ENCODE measurements at regions of chr2 and their contacts with region 1.

Region 1: GRCh38 chr2:178397002-178397605 is 53.9 kb downstream of the PRKRA start:
- DNase-seq: no peak
- H3K4me3 ChIP-seq: no peak overlapping the region
- H3K27ac ChIP-seq: no peak overlapping the region
- H3K4me1 ChIP-seq: no peaks in the 10 kb centered on the region
- H3K27me3 ChIP-seq: no peaks in the 10 kb centered on the region
- CTCF ChIP-seq: peak; percentile 94

Region 2: GRCh38 chr2:178128836-178129630 is 268.1 kb before region 1 on chr2:
- CTCF ChIA-PET with region 1: no interaction called
- POLR2A ChIA-PET with region 1: no interaction called
- intact Hi-C with region 1: loop called (anchors 1 kb)
- DNase-seq: no peak
- H3K4me3 ChIP-seq: no peak overlapping the region
- H3K27ac ChIP-seq: no peak overlapping the region
- H3K4me1 ChIP-seq: peaks cover 13% of the 10 kb centered on the region
- H3K27me3 ChIP-seq: no peaks in the 10 kb centered on the region
- CTCF ChIP-seq: no peak

Region 3: DNA sequence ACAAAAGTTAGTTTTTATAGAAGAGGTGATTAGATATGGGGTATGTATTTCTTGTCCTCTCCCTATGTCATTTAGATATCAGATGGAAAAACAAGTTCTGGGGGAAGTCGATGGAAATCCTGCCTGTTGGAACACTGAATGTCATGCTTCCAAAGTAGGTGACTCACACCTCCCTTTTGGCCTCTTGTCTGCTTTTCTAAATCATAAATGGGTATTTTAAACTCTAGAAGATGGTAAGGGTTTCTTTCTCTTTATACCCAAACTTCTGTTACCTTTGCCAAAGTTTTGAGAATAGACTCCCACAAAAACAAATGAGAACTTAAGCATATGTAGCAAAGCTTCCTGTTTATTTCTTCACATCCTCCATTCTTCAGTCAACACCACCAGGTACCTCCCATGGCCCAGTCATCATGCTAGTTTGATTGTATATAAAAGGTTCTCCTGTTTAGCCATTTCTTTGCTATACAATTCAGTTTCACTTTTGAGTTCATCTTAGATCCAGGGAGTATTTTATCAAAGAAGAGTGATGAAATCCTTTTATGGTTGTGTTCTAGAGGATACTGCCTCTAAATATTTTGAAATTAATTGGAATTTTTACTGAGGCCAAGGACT is 10.0 kb before region 1 on chr2:
- CTCF ChIA-PET with region 1: interaction called, 14 read pairs
- POLR2A ChIA-PET with region 1: no interaction called
- intact Hi-C with region 1: no loop called
- DNase-seq: no peak
- H3K4me3 ChIP-seq: no peak overlapping the region
- H3K27ac ChIP-seq: no peak overlapping the region
- H3K4me1 ChIP-seq: no peaks in the 10 kb centered on the region
- H3K27me3 ChIP-seq: no peaks in the 10 kb centered on the region
- CTCF ChIP-seq: no peak

Region 4: DNA sequence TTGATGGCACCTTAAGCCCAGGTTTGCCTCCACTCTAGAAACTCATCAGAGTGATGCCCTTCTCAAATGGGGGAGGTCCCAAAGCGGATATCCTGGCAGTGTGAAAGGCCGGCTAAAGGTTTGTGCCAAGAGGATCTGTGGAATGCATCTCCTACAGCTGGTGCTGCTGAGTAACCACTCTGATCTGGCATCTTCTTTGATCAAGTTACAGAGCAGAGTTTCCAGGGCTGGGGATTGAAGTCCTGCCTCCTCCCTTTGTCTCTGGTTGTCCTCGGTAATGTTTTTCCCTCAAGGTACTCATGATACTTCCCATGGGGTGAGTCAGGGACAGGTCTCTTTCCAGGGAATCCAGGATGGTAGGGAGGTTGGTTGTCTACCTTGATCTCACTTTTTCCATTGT is 29.3 kb after region 1 on chr2:
- CTCF ChIA-PET with region 1: no interaction called
- POLR2A ChIA-PET with region 1: no interaction called
- intact Hi-C with region 1: no loop called
- DNase-seq: no peak
- H3K4me3 ChIP-seq: no peak overlapping the region
- H3K27ac ChIP-seq: no peak overlapping the region
- H3K4me1 ChIP-seq: no peaks in the 10 kb centered on the region
- H3K27me3 ChIP-seq: no peaks in the 10 kb centered on the region
- CTCF ChIP-seq: no peak

Region 5: GRCh38 chr2:178542569-178542968 is 145.5 kb after region 1 on chr2:
- CTCF ChIA-PET with region 1: interaction called, 11 read pairs
- POLR2A ChIA-PET with region 1: no interaction called
- intact Hi-C with region 1: no loop called
- DNase-seq: no peak
- H3K4me3 ChIP-seq: no peak overlapping the region
- H3K27ac ChIP-seq: no peak overlapping the region
- H3K4me1 ChIP-seq: no peaks in the 10 kb centered on the region
- H3K27me3 ChIP-seq: no peaks in the 10 kb centered on the region
- CTCF ChIP-seq: no peak